ENCODE measurements at regions of chr4 and their contacts with region 1.

Region 1: DNA sequence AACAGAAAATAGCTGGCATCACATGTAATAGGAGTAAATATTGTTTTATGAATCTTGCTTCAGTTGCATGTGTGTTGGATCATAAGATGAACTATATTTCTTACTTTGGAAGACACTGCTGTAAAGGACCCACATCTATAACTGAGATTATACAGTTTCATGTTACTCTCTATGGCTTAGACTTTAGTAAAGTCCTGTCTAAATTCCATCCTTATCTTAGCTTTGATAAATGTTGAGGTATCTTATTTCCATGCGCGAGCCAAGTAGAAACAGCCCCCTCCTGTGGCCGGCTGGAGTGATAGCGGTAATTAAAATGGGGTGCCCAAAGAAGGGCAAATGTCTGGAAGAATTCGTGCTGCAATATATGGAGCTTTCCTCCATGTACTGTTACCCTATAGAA is 43.0 kb downstream of the CCDC158 start:
- DNase-seq: peak; percentile 66
- H3K4me3 Mint-ChIP-seq: no peak overlapping the region
- H3K27ac Mint-ChIP-seq: no peak overlapping the region
- H3K4me1 Mint-ChIP-seq: no peaks in the 10 kb centered on the region
- H3K27me3 Mint-ChIP-seq: no peaks in the 10 kb centered on the region

Region 2: DNA sequence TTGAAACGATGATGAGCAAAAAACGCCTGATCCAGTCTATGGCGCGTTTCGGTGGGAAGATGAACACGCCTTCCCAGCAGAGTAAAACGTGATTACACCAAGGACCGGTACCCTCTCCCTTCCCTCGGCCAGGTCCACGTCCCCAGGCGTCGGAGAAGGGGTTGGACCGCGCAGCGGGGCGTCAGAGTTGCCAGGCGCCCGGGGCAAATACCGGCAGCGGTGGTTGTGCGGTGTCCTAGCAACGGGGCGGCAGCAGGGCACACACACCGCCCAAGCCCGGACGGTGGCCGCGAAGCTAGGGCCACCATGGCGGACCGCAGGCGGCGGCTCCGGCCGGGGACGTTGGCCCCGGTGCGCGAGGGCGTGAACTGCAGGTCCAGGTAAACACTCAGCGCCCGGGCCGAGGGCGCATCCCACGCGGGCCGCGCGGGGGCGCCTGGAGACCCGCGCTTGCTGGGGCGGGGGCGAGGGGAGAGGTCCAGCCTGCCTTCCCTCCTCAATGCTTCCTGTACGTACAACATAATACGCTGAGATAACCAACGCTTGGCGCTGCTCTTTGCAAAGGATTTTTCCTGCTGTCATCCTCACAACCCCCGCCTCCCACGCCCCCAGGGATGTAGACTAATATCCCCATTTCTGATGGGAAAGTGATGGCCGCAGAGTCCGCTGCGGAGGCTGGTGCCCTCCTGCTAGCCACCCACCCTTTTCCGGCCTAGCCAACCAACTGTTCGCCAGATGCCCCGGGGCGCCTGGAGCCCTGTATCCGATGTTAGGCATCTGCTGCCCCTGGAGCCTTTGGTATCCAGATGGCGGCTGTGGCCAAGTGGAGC is 126.3 kb before region 1 on chr4 and contains the start of gene FAM47E:
- CTCF ChIA-PET with region 1: interaction called, 11 read pairs
- intact Hi-C with region 1: loop called (anchors 5 kb)
- DNase-seq: peak; percentile 37
- H3K4me3 Mint-ChIP-seq: peak within 1 kb of the TSS; percentile 65
- H3K27ac Mint-ChIP-seq: no peak within 1 kb of the TSS
- H3K4me1 Mint-ChIP-seq: peaks cover 4% of the 10 kb centered on the region
- H3K27me3 Mint-ChIP-seq: peaks cover 39% of the 10 kb centered on the region
- total RNA-seq, gene FAM47E: not detected

Region 3: DNA sequence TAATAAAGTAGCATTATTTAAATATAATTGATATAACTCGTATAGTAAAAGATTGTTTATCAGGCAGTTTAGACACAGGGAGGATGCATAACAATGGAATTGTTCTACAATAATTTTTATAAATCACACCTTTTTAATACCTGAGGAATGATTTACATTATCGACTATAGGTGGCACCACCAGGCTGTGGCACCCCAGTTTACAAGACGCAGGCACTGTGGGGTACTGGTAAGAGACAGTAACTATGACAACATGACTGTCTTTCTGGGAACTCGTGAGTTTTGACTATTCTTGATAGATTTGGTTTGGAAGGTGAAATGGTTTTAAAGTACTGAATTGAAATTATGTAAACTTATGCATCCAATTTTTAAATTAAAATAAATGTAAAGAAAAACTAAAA is 98.4 kb before region 1 on chr4:
- CTCF ChIA-PET with region 1: interaction called, 8 read pairs
- intact Hi-C with region 1: loop called (anchors 1 kb)
- DNase-seq: peak; percentile 24
- H3K4me3 Mint-ChIP-seq: no peak overlapping the region
- H3K27ac Mint-ChIP-seq: no peak overlapping the region
- H3K4me1 Mint-ChIP-seq: no peaks in the 10 kb centered on the region
- H3K27me3 Mint-ChIP-seq: peaks cover 5% of the 10 kb centered on the region

Region 4: GRCh38 chr4:76305971-76306881 is 71.7 kb before region 1 on chr4 and contains the start of gene STBD1:
- CTCF ChIA-PET with region 1: interaction called, 9 read pairs
- intact Hi-C with region 1: loop called (anchors 5 kb)
- DNase-seq: peak; percentile 19
- H3K4me3 Mint-ChIP-seq: peak within 1 kb of the TSS; percentile 72
- H3K27ac Mint-ChIP-seq: no peak within 1 kb of the TSS
- H3K4me1 Mint-ChIP-seq: peaks cover 17% of the 10 kb centered on the region
- H3K27me3 Mint-ChIP-seq: peaks cover 4% of the 10 kb centered on the region
- total RNA-seq, gene STBD1: not detected

Region 5: GRCh38 chr4:76366737-76367136 is 11.2 kb before region 1 on chr4:
- CTCF ChIA-PET with region 1: interaction called, 13 read pairs
- intact Hi-C with region 1: no loop called
- DNase-seq: no peak
- H3K4me3 Mint-ChIP-seq: no peak overlapping the region
- H3K27ac Mint-ChIP-seq: no peak overlapping the region
- H3K4me1 Mint-ChIP-seq: peaks cover 9% of the 10 kb centered on the region
- H3K27me3 Mint-ChIP-seq: peaks cover 10% of the 10 kb centered on the region